Caco-2 (cell line): ENCODE measurements at regions of chr10 and their contacts with region 1.

Region 1: GRCh38 chr10:68208424-68209042 is 23.4 kb downstream of the ATOH7 start:
- DNase-seq: peak; percentile 83 to 87
- H3K4me3 ChIP-seq: no peak overlapping the region
- H3K4me3 Mint-ChIP-seq: no peak overlapping the region
- H3K27ac Mint-ChIP-seq: no peak overlapping the region
- H3K4me1 ChIP-seq: no peaks in the 10 kb centered on the region
- H3K4me1 Mint-ChIP-seq: no peaks in the 10 kb centered on the region
- H3K27me3 ChIP-seq: no peaks in the 10 kb centered on the region; the same call in 1 of the 2 replicates
- H3K27me3 Mint-ChIP-seq: peaks cover 16% of the 10 kb centered on the region
- CTCF ChIP-seq: peak; percentile 82 to 92

Region 2: DNA sequence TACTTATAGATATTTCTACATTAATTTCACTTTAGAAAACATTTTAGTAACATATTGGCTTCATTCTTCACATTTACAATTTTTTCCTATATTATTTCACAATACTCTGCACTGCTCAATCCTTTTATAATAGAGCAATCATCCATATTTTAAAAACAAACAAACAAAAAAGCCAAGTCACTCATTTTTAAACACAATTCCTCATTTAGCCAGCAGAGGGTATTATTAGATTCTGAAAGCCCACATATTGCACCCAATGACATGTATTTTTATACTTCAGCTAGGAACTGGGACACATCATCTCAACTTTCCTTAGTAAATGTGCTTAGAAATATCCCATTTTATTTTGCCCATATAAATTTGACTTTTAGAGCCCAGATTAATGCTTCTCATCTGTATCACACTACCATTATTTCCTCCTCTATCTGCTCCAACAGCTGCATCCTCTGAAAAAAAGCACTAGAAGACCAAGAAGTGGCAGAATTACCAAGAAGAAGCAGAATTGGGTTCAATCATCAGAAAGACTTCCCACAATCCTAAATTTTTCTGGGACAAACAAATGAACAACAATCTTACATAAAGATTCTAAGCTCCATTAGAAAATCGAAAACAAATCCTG is 542.0 kb before region 1 on chr10:
- CTCF ChIA-PET with region 1: no interaction called
- POLR2A ChIA-PET with region 1: no interaction called
- intact Hi-C with region 1: loop called (anchors 5 kb)
- DNase-seq: peak in 1 of 2 experiments; percentile 43
- H3K4me3 ChIP-seq: no peak overlapping the region
- H3K4me3 Mint-ChIP-seq: no peak overlapping the region
- H3K27ac Mint-ChIP-seq: no peak overlapping the region
- H3K4me1 ChIP-seq: no peaks in the 10 kb centered on the region
- H3K4me1 Mint-ChIP-seq: no peaks in the 10 kb centered on the region
- H3K27me3 ChIP-seq: no peaks in the 10 kb centered on the region
- H3K27me3 Mint-ChIP-seq: peaks cover 21% of the 10 kb centered on the region
- CTCF ChIP-seq: peak; percentile 61 to 75

Region 3: DNA sequence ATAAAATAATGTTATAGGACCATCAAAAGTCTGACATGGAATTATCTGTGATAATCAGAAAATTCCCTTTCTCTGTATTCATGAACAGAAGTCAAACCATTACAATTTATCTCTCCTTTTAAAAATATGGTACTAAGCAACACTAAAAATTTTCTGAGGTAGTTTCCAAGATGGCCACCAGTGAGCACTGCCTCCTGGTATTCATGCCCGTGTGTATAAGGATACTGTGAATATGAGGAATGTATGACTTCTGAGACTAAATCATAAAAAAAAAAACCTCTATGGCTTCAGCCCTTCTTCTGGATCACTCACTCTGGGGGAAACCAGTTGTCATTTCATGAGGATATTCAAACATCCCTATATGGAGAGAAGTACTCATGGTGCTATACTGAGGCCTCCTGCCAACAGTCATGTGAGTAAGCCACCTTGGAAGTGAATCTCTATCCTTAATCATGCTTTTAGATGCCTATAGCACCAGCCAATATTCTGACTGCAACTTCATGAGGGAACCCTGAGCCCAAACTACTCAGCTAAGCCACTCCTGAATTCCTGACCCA is 283.0 kb before region 1 on chr10:
- CTCF ChIA-PET with region 1: no interaction called
- POLR2A ChIA-PET with region 1: no interaction called
- intact Hi-C with region 1: loop called (anchors 5 kb)
- DNase-seq: no peak
- H3K4me3 ChIP-seq: no peak overlapping the region
- H3K4me3 Mint-ChIP-seq: no peak overlapping the region
- H3K27ac Mint-ChIP-seq: no peak overlapping the region
- H3K4me1 ChIP-seq: no peaks in the 10 kb centered on the region
- H3K4me1 Mint-ChIP-seq: no peaks in the 10 kb centered on the region
- H3K27me3 ChIP-seq: no peaks in the 10 kb centered on the region
- H3K27me3 Mint-ChIP-seq: no peaks in the 10 kb centered on the region
- CTCF ChIP-seq: no peak

Region 4: DNA sequence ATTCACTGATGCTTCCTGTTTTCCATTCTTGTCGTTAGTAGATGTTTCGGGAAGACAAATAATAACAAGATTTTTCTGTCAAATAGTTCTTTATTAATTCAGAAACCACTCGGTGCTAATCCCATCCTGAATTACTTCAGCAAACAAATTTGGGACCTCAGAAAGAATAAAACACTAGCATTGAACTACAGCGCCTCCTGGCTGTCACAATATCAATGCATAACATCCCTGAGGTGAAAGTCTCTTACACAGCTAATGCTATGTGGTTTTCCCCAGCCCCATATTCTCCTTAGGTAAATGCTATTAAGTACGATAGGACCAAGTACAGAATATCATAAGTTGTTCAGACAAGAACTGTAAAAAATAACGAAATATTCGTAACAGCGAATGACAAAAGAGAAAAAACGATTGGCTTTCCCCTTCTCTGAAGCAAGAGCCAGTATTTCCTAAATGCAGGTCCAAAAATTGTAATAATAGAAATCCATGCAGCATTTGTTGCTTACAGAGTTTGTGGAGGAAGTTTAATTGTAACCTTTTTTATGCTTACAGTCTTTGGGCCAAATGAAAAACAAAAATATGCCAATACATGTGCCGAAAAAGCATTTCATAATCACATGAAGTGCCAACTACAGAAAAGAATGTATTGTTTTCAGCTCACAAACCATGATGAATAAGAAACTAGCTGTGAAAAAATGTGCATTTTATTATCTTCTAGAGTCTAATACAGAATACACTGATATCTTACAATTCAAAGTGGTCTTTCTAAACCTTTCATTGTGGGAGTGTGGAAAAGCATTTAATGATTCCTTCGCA is 52.0 kb before region 1 on chr10:
- CTCF ChIA-PET with region 1: no interaction called
- POLR2A ChIA-PET with region 1: no interaction called
- intact Hi-C with region 1: loop called (anchors 1 kb)
- DNase-seq: peak; percentile 62 to 78
- H3K4me3 ChIP-seq: no peak overlapping the region
- H3K4me3 Mint-ChIP-seq: no peak overlapping the region
- H3K27ac Mint-ChIP-seq: no peak overlapping the region
- H3K4me1 ChIP-seq: peaks cover 10% of the 10 kb centered on the region
- H3K4me1 Mint-ChIP-seq: peaks cover 9% of the 10 kb centered on the region
- H3K27me3 ChIP-seq: no peaks in the 10 kb centered on the region
- H3K27me3 Mint-ChIP-seq: no peaks in the 10 kb centered on the region
- CTCF ChIP-seq: peak; percentile 91 to 94

Region 5: GRCh38 chr10:68171539-68172080 is 36.9 kb before region 1 on chr10:
- CTCF ChIA-PET with region 1: no interaction called
- POLR2A ChIA-PET with region 1: no interaction called
- intact Hi-C with region 1: no loop called
- DNase-seq: no peak
- H3K4me3 ChIP-seq: no peak overlapping the region
- H3K4me3 Mint-ChIP-seq: no peak overlapping the region
- H3K27ac Mint-ChIP-seq: no peak overlapping the region
- H3K4me1 ChIP-seq: no peaks in the 10 kb centered on the region
- H3K4me1 Mint-ChIP-seq: no peaks in the 10 kb centered on the region
- H3K27me3 ChIP-seq: no peaks in the 10 kb centered on the region
- H3K27me3 Mint-ChIP-seq: no peaks in the 10 kb centered on the region
- CTCF ChIP-seq: no peak

Region 6: DNA sequence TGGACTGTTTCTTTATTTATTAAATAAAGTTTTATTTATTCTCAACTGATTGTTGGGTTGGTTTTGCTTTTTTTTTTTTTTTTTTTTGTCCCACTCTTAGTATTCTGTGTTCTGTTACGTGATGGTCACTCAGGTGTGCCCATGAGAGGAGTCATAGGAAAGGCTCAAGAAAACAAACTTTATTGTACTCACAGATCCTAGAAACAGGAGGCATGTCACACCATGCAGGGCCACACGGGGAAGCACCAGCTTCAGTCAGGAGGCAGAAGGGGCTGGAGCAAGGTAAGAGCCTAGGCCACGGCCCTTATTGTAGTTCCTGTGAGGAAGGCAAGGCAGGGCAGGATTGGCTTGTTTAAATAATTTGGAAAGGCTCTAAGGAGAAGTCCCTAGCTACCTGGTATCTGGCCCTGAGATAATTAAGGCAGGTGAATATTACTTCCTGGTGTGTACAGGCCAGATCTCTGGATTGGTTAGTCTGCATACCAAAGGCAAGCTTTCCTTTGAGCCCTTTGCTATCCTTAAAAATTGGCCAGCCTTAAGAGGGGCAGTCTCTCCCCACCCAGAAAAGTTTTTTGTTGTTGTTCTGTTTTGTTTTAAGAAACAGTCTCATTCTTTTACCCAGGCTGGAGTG is 15.1 kb after region 1 on chr10:
- CTCF ChIA-PET with region 1: interaction called, 10 read pairs
- POLR2A ChIA-PET with region 1: no interaction called
- intact Hi-C with region 1: no loop called
- DNase-seq: peak; percentile 58 to 60
- H3K4me3 ChIP-seq: no peak overlapping the region
- H3K4me3 Mint-ChIP-seq: no peak overlapping the region
- H3K27ac Mint-ChIP-seq: no peak overlapping the region
- H3K4me1 ChIP-seq: no peaks in the 10 kb centered on the region
- H3K4me1 Mint-ChIP-seq: no peaks in the 10 kb centered on the region
- H3K27me3 ChIP-seq: no peaks in the 10 kb centered on the region
- H3K27me3 Mint-ChIP-seq: no peaks in the 10 kb centered on the region
- CTCF ChIP-seq: peak; percentile 33 to 50

Region 7: DNA sequence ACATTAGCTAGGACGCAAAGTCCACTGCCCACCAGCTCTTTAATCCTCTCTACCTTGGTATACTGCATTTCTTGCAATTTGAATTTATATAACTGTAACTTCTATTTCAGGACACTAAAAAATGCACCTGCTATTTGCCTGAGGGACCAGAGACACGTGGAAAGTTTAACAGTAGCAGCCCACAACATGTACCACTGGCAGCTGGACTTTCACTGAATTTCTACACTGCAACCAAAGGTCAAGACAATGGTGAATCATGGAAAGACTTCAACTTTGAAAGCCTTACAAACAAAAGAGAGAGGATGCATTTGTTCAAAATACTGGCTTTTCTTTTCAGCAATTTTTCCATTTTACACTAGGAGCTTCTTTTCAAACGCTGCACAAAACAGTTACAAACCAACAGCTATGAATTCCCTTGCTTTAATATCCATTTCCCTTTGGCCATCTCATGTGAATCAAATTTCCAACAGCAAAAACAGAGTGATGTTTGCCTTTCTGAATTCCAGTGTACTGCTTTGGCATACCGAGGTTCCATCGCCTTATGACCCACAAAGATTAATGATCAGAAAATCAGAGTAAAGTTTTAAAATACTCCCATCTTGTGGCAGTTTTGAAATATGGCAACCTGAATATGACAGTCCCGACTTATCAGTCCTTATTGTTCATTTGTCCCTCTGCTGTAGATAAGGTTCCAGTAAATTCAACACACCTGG is 93.4 kb after region 1 on chr10:
- CTCF ChIA-PET with region 1: interaction called, 56 read pairs
- POLR2A ChIA-PET with region 1: no interaction called
- intact Hi-C with region 1: loop called (anchors 1 kb)
- DNase-seq: peak in 1 of 2 experiments; percentile 66
- H3K4me3 ChIP-seq: no peak overlapping the region
- H3K4me3 Mint-ChIP-seq: no peak overlapping the region
- H3K27ac Mint-ChIP-seq: no peak overlapping the region
- H3K4me1 ChIP-seq: peaks cover 20% of the 10 kb centered on the region
- H3K4me1 Mint-ChIP-seq: peaks cover 21% of the 10 kb centered on the region
- H3K27me3 ChIP-seq: no peaks in the 10 kb centered on the region
- H3K27me3 Mint-ChIP-seq: no peaks in the 10 kb centered on the region
- CTCF ChIP-seq: peak; percentile 65 to 83

Region 8: GRCh38 chr10:68348265-68348741 is 139.8 kb after region 1 on chr10:
- CTCF ChIA-PET with region 1: interaction called, 35 read pairs
- POLR2A ChIA-PET with region 1: no interaction called
- intact Hi-C with region 1: loop called (anchors 1 kb)
- DNase-seq: peak; percentile 73 to 76
- H3K4me3 ChIP-seq: no peak overlapping the region
- H3K4me3 Mint-ChIP-seq: no peak overlapping the region
- H3K27ac Mint-ChIP-seq: no peak overlapping the region
- H3K4me1 ChIP-seq: no peaks in the 10 kb centered on the region
- H3K4me1 Mint-ChIP-seq: no peaks in the 10 kb centered on the region
- H3K27me3 ChIP-seq: no peaks in the 10 kb centered on the region
- H3K27me3 Mint-ChIP-seq: no peaks in the 10 kb centered on the region
- CTCF ChIP-seq: peak; percentile 92 to 97